Pancreas (tissue), 10 donors: ENCODE measurements at regions of chr11 and their contacts with region 1.

Region 1: GRCh38 chr11:19951558-19952115 is 208.6 kb downstream of the DBX1 start:
- DNase-seq: no peak
- ATAC-seq: peak; percentile 28 to 78 (median 68)
- H3K4me3 ChIP-seq: no peak overlapping the region
- H3K27ac ChIP-seq: peak overlapping the region in 2 of 4 donors; percentile 56 to 60
- H3K4me1 ChIP-seq: peaks cover 8 to 35% (median 33%) of the 10 kb centered on the region in 3 donors
- H3K27me3 ChIP-seq: no peaks in the 10 kb centered on the region
- CTCF ChIP-seq: peak; percentile 41 to 58 (median 47)

Region 2: GRCh38 chr11:19919050-19919561 is 32.5 kb before region 1 on chr11:
- intact Hi-C with region 1: no loop called
- DNase-seq: peak; percentile 50 to 77 (median 64)
- ATAC-seq: peak; percentile 98 to 99 (median 98)
- H3K4me3 ChIP-seq: no peak overlapping the region
- H3K27ac ChIP-seq: peak overlapping the region in 1 of 4 donors; percentile 45
- H3K4me1 ChIP-seq: peaks cover under 1% of the 10 kb centered on the region in 3 donors
- H3K27me3 ChIP-seq: no peaks in the 10 kb centered on the region
- CTCF ChIP-seq: no peak

Region 3: GRCh38 chr11:20102397-20102796 is 150.8 kb after region 1 on chr11:
- intact Hi-C with region 1: loop called in 1 of 3 experiments (anchors 10 kb)
- DNase-seq: no peak
- ATAC-seq: no peak
- H3K4me3 ChIP-seq: no peak overlapping the region
- H3K27ac ChIP-seq: no peak overlapping the region
- H3K4me1 ChIP-seq: no peaks in the 10 kb centered on the region
- H3K27me3 ChIP-seq: no peaks in the 10 kb centered on the region
- CTCF ChIP-seq: no peak

Region 4: GRCh38 chr11:20110908-20111669 is 159.5 kb after region 1 on chr11:
- intact Hi-C with region 1: loop called in 2 of 3 experiments (anchors 5 to 10 kb)
- DNase-seq: peak in 4 of 6 donors; percentile 31 to 64 (median 50)
- ATAC-seq: peak; percentile 55 to 78 (median 74)
- H3K4me3 ChIP-seq: no peak overlapping the region
- H3K27ac ChIP-seq: peak overlapping the region in 1 of 4 donors; percentile 82
- H3K4me1 ChIP-seq: peaks cover 5 to 12% (median 8%) of the 10 kb centered on the region in 3 donors
- H3K27me3 ChIP-seq: no peaks in the 10 kb centered on the region
- CTCF ChIP-seq: peak; percentile 70 to 86 (median 81)

Region 5: GRCh38 chr11:20127671-20128527 is 176.3 kb after region 1 on chr11:
- intact Hi-C with region 1: loop called in 1 of 3 experiments (anchors 5 kb)
- DNase-seq: peak; percentile 51 to 90 (median 79)
- ATAC-seq: peak; percentile 83 to 87 (median 86)
- H3K4me3 ChIP-seq: no peak overlapping the region
- H3K27ac ChIP-seq: no peak overlapping the region
- H3K4me1 ChIP-seq: no peaks in the 10 kb centered on the region
- H3K27me3 ChIP-seq: no peaks in the 10 kb centered on the region
- CTCF ChIP-seq: peak; percentile 61 to 86 (median 66)

Region 6: GRCh38 chr11:20274031-20274430 is 322.4 kb after region 1 on chr11:
- intact Hi-C with region 1: no loop called
- DNase-seq: no peak
- ATAC-seq: no peak
- H3K4me3 ChIP-seq: no peak overlapping the region
- H3K27ac ChIP-seq: no peak overlapping the region
- H3K4me1 ChIP-seq: no peaks in the 10 kb centered on the region
- H3K27me3 ChIP-seq: no peaks in the 10 kb centered on the region
- CTCF ChIP-seq: no peak